ENCODE measurements at regions of chr4 and their contacts with region 1.

Region 1: DNA sequence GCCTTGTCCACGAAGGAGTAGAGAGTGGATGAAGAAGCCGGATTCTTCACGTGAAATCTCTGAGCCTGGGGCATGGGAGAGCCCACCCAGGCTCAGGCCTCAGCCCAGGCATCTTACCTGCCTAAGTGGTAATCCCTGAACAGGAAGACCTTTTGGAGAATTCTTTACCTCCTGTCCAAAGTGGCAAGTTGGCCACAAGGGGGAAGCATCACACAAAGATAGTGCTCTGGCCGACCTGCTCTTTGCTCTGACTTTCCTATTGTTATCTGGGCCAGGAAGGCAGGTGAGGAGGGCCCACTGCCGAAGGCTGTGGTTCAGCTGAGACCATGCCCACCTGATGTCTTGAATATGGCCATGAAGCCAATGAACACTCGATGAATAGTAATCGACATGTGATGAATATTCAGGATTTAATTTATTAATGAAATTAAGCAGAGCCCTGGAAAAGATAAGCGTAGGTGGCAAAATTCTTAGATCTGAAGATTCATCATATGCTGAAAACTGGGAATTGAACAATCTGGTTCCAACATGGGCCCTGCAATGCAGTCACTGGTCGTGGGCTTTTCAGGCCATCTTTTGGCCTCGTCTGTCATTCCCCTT is 93.8 kb downstream of the PDGFRA start:
- DNase-seq: peak; percentile 85
- H3K4me3 Mint-ChIP-seq: no peak overlapping the region
- H3K27ac Mint-ChIP-seq: no peak overlapping the region
- H3K4me1 Mint-ChIP-seq: no peaks in the 10 kb centered on the region
- H3K27me3 Mint-ChIP-seq: no peaks in the 10 kb centered on the region
- CTCF ChIP-seq: peak; percentile 85

Region 2: GRCh38 chr4:52925531-52925968 is 1397.4 kb before region 1 on chr4:
- CTCF ChIA-PET with region 1: no interaction called
- POLR2A ChIA-PET with region 1: no interaction called
- intact Hi-C with region 1: no loop called
- DNase-seq: peak; percentile 1
- H3K4me3 Mint-ChIP-seq: no peak overlapping the region
- H3K27ac Mint-ChIP-seq: no peak overlapping the region
- H3K4me1 Mint-ChIP-seq: no peaks in the 10 kb centered on the region
- H3K27me3 Mint-ChIP-seq: no peaks in the 10 kb centered on the region
- CTCF ChIP-seq: no peak

Region 3: GRCh38 chr4:54308110-54308509 is 14.8 kb before region 1 on chr4:
- CTCF ChIA-PET with region 1: interaction called, 21 read pairs
- POLR2A ChIA-PET with region 1: no interaction called
- intact Hi-C with region 1: no loop called
- DNase-seq: no peak
- H3K4me3 Mint-ChIP-seq: no peak overlapping the region
- H3K27ac Mint-ChIP-seq: no peak overlapping the region
- H3K4me1 Mint-ChIP-seq: no peaks in the 10 kb centered on the region
- H3K27me3 Mint-ChIP-seq: peaks cover 57% of the 10 kb centered on the region
- CTCF ChIP-seq: no peak

Region 4: GRCh38 chr4:54440394-54441136 is 117.6 kb after region 1 on chr4:
- CTCF ChIA-PET with region 1: interaction called, 38 read pairs
- POLR2A ChIA-PET with region 1: no interaction called
- intact Hi-C with region 1: loop called (anchors 1 kb)
- DNase-seq: peak; percentile 49
- H3K4me3 Mint-ChIP-seq: no peak overlapping the region
- H3K27ac Mint-ChIP-seq: no peak overlapping the region
- H3K4me1 Mint-ChIP-seq: no peaks in the 10 kb centered on the region
- H3K27me3 Mint-ChIP-seq: peaks cover 2% of the 10 kb centered on the region
- CTCF ChIP-seq: peak; percentile 49

Region 5: DNA sequence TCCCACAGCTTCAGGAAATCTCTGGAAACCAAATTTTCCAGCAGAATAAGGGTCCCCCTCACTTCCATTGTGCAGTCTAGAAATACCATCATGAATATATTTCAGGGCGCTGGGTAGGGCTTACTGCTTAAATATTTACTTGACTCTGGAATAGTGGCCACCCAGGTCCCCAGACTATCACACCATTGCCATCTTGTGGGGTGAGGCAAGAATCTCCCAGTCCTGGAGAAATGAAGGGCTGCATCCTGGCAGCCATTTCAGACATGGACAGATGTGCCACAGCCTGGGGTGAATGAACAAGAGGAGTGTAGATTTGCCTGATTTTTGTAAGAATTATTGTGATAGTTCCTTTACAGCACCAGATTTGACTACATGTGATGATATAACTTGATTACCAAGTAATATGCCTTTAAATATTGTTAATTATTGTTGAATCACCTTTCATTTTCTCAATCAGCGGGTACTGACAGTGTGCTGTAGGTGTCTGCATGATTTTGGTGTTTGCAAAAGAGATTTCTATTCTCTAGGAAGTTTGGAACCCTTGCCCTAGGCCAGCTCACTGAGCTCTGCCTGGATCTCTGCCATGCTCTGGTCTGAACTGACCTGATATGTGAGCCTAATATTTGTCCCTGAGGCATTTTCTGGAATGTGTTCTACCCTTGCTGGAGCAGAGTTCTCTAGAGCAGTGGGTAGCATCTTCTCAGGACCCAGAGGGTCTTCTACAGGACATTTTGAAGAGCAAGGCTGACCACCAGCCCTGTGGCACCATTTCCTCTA is 518.3 kb after region 1 on chr4:
- CTCF ChIA-PET with region 1: no interaction called
- POLR2A ChIA-PET with region 1: no interaction called
- intact Hi-C with region 1: loop called (anchors 1 kb)
- DNase-seq: peak; percentile 25
- H3K4me3 Mint-ChIP-seq: no peak overlapping the region
- H3K27ac Mint-ChIP-seq: no peak overlapping the region
- H3K4me1 Mint-ChIP-seq: no peaks in the 10 kb centered on the region
- H3K27me3 Mint-ChIP-seq: no peaks in the 10 kb centered on the region
- CTCF ChIP-seq: no peak